ENCODE measurements at regions of chr16 and their contacts with region 1.

Region 1: DNA sequence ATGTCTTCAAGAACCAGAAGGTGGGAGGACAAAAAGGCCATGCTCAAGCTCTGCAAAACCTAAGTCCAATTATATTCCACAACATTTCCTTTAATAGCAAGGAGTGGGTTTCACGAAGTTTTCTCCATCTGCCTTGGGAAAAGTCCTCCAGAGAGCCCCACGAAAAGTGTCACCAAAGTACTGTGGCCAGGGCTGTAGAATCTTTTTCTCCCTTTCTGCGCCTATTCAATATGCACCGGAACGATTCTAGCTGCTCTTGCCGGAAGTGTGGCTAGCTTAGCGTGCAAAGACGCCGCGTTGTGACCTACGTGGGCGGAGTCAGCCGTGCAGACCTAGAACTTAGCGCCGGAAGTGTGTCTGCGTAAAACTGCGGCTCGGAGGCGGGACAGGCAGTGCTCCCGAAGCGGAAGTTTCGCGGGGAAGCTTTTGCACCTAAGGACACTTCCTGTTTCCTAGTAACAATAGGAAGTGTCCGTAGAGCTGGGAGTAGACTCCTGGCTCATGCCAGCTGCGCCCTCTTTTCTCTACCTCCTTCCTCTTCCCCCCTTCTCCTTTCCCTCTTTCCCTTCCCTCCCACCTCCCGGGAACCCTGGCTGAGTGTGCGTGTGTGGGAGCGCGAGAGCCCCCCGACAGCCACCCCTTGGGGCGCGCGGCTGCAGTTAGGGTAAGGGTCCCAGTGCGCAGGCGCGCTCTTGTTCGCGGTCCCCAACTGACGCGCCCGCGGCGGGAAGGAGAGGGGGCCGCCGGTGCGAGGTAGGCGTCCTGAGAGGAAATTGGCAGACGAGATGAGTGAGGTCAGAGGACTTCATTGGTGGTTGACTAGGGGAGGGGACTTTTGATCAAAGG is at the starts of genes ZNF646 and ZNF668:
- DNase-seq: peak; percentile 99
- ATAC-seq: peak; percentile 83
- H3K4me3 Mint-ChIP-seq: peak within 1 kb of the TSS; percentile 97
- H3K27ac Mint-ChIP-seq: peak within 1 kb of the TSS; percentile 98
- H3K4me1 Mint-ChIP-seq: peaks cover 30% of the 10 kb centered on the region
- H3K27me3 Mint-ChIP-seq: no peaks in the 10 kb centered on the region
- total RNA-seq, gene ZNF646: 21.3 to 25.8 TPM
- total RNA-seq, gene ZNF668: 9.2 to 9.9 TPM

Region 2: GRCh38 chr16:30526823-30527635 is 547.2 kb before region 1 on chr16:
- CTCF ChIA-PET with region 1: no interaction called
- POLR2A ChIA-PET with region 1: no interaction called
- intact Hi-C with region 1: loop called in 1 of 2 experiments (anchors 1 kb)
- DNase-seq: peak; percentile 98
- ATAC-seq: peak; percentile 93
- H3K4me3 Mint-ChIP-seq: peak overlapping the region; percentile 55
- H3K27ac Mint-ChIP-seq: peak overlapping the region; percentile 62
- H3K4me1 Mint-ChIP-seq: peaks cover 37% of the 10 kb centered on the region
- H3K27me3 Mint-ChIP-seq: no peaks in the 10 kb centered on the region

Region 3: GRCh38 chr16:30663820-30664396 is 410.3 kb before region 1 on chr16:
- CTCF ChIA-PET with region 1: no interaction called
- POLR2A ChIA-PET with region 1: no interaction called
- intact Hi-C with region 1: no loop called
- DNase-seq: no peak
- ATAC-seq: no peak
- H3K4me3 Mint-ChIP-seq: no peak overlapping the region
- H3K27ac Mint-ChIP-seq: peak overlapping the region; percentile 35
- H3K4me1 Mint-ChIP-seq: peaks cover 32% of the 10 kb centered on the region
- H3K27me3 Mint-ChIP-seq: no peaks in the 10 kb centered on the region

Region 4: DNA sequence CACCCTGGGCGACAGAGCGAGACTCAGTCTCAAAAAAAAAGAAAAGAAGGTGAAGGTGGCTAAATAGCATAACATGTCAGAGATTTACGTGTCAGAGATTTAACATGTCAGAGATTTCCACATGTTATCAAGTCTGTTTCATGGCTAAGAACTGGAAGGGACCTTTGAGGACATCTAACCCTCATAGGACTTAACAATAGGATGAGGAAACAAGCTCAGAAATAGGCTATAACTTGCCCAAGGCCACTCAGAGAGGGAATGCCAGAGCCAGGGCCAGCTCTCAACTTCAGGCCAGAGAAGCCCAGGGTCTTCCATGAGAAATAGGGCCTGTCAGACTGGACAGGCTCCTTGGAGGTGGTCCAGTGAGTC is 260.4 kb before region 1 on chr16:
- CTCF ChIA-PET with region 1: no interaction called
- POLR2A ChIA-PET with region 1: no interaction called
- intact Hi-C with region 1: loop called in 1 of 2 experiments (anchors 1 kb)
- DNase-seq: no peak
- ATAC-seq: peak; percentile 4
- H3K4me3 Mint-ChIP-seq: peak overlapping the region; percentile 87
- H3K27ac Mint-ChIP-seq: peak overlapping the region; percentile 81
- H3K4me1 Mint-ChIP-seq: peaks cover 12% of the 10 kb centered on the region
- H3K27me3 Mint-ChIP-seq: no peaks in the 10 kb centered on the region

Region 5: GRCh38 chr16:30997000-30997886 is 76.9 kb before region 1 on chr16:
- CTCF ChIA-PET with region 1: no interaction called
- POLR2A ChIA-PET with region 1: interaction called, 3 read pairs
- intact Hi-C with region 1: loop called (anchors 1 to 2 kb)
- DNase-seq: peak; percentile 94
- ATAC-seq: peak; percentile 95
- H3K4me3 Mint-ChIP-seq: peak overlapping the region; percentile 72
- H3K27ac Mint-ChIP-seq: no peak overlapping the region
- H3K4me1 Mint-ChIP-seq: peaks cover 16% of the 10 kb centered on the region
- H3K27me3 Mint-ChIP-seq: peaks cover 3% of the 10 kb centered on the region

Region 6: DNA sequence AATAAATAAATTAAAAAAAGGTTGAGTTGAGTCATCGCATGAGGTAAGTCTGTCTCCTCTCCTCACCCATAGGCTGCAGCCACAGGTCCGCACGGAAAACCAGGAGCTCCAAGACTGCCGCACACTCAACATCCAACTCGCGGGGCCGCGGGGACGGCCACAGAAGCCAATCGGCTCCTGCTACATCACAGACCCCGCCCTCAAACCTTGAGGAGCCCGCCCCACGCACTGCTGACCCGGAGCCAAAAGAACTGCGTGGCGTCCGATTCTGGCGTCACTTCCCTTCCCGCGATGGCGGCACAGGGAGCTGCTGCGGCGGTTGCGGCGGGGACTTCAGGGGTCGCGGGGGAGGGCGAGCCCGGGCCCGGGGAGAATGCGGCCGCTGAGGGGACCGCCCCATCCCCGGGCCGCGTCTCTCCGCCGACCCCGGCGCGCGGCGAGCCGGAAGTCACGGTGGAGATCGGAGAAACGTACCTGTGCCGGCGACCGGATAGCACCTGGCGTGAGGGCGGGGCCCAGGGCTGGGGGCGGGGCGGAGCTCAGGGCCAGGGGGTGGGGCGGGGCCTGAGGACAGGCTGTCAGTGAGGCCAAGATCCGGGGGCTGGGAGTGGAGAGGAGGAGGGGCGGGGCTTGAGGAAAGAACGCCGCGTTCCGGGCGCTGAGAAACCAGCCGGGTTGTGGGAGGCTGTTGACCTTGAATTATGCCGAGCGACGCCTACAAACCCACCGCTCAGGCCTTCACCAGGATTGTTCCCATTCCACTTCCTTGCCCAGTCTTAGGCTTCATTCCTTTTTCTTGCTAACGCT is 43.4 kb after region 1 on chr16 and contains the start of gene KAT8:
- CTCF ChIA-PET with region 1: interaction called, 10 read pairs
- POLR2A ChIA-PET with region 1: interaction called, 23 read pairs
- intact Hi-C with region 1: loop called (anchors 1 kb)
- DNase-seq: peak; percentile 99
- ATAC-seq: peak; percentile 93
- H3K4me3 Mint-ChIP-seq: peak within 1 kb of the TSS; percentile 88
- H3K27ac Mint-ChIP-seq: peak within 1 kb of the TSS; percentile 83
- H3K4me1 Mint-ChIP-seq: peaks cover 14% of the 10 kb centered on the region
- H3K27me3 Mint-ChIP-seq: no peaks in the 10 kb centered on the region
- total RNA-seq, gene KAT8: 53.6 to 63.1 TPM

Region 7: DNA sequence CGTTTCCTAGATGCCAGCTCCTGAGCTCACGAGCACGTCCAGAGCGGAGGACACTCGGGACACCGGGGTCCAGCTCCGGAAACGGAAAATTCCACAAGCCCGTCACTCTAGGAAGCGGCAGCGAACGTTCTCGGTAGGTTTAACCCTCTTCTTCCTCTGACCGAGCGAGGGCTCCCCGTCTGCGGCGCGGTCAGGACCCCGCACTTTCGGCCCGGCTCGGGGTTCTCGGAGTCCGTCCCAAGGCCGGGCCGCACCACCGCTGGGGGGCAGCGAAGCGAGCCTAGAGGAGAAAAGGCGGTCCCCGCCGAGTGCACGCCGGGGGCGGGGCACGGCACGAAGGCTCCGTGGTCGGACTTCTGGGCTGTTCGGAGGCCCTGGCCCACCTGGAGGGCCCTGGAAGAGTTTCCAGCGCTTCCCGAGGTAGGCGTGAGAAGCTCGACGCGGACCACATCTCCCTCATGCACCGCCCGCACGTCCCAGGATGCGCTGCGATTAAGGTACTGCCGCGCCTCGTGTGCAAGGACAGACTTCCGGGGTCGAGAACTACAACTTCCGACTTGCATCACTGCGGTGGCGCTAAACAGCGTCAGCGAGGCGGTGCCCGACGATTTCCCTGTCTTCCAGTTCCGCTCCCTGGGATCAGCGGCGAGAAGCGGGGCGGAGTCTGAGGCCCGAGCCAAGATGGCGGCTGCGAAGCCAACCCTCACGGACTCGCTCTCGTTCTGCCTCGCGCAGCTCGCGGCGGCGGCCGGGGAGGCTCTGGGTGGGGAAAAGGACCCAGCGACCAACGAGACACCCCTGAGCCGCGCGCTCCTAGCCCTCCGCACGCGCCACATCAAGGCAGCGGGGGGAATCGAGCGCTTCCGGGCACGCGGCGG is 384.9 kb after region 1 on chr16 and contains the start of gene ARMC5:
- CTCF ChIA-PET with region 1: no interaction called
- POLR2A ChIA-PET with region 1: no interaction called
- intact Hi-C with region 1: loop called (anchors 1 kb)
- DNase-seq: peak; percentile 98
- ATAC-seq: peak; percentile 81
- H3K4me3 Mint-ChIP-seq: peak within 1 kb of the TSS; percentile 85
- H3K27ac Mint-ChIP-seq: peak within 1 kb of the TSS; percentile 94
- H3K4me1 Mint-ChIP-seq: peaks cover 42% of the 10 kb centered on the region
- H3K27me3 Mint-ChIP-seq: no peaks in the 10 kb centered on the region
- total RNA-seq, gene ARMC5: 7.0 to 7.9 TPM